ENCODE measurements at regions of chr10 and their contacts with region 1.

Region 1: GRCh38 chr10:98467506-98468346 is 21.0 kb upstream of the HPS1 start:
- H3K4me3 ChIP-seq: no peak overlapping the region; the same call in 1 of the 2 replicates
- H3K27ac ChIP-seq: no peak overlapping the region
- H3K4me1 ChIP-seq: 0 out of 2 replicates have a peak, but pooled peaks cover 3% of the 10 kb centered on the region
- CTCF ChIP-seq: peak; percentile 91

Region 2: DNA sequence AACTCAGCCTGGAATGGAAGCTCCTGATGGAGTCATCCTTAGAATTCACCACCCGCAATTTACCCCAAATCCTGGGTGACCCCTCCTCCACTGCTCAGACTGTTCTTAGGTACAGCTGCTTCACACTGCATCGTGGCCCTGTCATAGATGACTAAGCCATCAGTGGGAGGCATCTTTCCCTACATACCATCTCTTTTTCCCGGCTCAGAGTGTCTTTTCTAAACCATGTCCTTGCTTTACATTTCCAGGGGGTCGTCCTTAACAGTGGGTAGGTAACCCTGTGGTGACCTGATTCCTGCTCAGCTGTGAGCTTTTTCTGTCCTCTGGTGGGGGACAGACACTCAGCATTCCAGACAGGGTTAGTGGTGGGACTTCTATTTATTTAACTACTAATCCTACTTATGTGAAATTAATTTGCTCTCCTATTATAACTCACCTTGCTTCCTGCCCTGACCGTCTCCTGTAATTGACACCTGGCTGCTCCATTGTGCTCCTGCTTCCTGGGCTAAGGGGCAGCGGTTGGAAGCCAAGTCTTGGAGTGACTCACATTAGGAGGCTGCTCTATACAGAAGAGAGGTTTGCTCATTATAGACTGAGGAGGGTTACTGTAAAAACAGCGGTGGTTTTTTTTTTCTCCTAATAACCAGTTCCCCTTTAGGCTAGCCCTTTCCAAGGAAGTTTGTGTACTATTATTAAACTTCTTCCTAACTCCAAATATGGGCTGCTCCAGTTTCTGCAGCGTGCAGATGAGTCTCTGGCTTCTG is 93.3 kb before region 1 on chr10:
- CTCF ChIA-PET with region 1: no interaction called
- POLR2A ChIA-PET with region 1: no interaction called
- H3K4me3 ChIP-seq: no peak overlapping the region
- H3K27ac ChIP-seq: no peak overlapping the region
- H3K4me1 ChIP-seq: no peaks in the 10 kb centered on the region
- CTCF ChIP-seq: no peak

Region 3: GRCh38 chr10:98400482-98400881 is 67.2 kb before region 1 on chr10:
- CTCF ChIA-PET with region 1: no interaction called
- POLR2A ChIA-PET with region 1: no interaction called
- H3K4me3 ChIP-seq: no peak overlapping the region
- H3K27ac ChIP-seq: no peak overlapping the region
- H3K4me1 ChIP-seq: 0 out of 2 replicates have a peak, but pooled peaks cover 4% of the 10 kb centered on the region
- CTCF ChIP-seq: no peak

Region 4: GRCh38 chr10:98425511-98426352 is 42.0 kb before region 1 on chr10:
- CTCF ChIA-PET with region 1: interaction called, 14 read pairs
- POLR2A ChIA-PET with region 1: no interaction called
- H3K4me3 ChIP-seq: no peak overlapping the region
- H3K27ac ChIP-seq: no peak overlapping the region
- H3K4me1 ChIP-seq: no peaks in the 10 kb centered on the region
- CTCF ChIP-seq: no peak

Region 5: DNA sequence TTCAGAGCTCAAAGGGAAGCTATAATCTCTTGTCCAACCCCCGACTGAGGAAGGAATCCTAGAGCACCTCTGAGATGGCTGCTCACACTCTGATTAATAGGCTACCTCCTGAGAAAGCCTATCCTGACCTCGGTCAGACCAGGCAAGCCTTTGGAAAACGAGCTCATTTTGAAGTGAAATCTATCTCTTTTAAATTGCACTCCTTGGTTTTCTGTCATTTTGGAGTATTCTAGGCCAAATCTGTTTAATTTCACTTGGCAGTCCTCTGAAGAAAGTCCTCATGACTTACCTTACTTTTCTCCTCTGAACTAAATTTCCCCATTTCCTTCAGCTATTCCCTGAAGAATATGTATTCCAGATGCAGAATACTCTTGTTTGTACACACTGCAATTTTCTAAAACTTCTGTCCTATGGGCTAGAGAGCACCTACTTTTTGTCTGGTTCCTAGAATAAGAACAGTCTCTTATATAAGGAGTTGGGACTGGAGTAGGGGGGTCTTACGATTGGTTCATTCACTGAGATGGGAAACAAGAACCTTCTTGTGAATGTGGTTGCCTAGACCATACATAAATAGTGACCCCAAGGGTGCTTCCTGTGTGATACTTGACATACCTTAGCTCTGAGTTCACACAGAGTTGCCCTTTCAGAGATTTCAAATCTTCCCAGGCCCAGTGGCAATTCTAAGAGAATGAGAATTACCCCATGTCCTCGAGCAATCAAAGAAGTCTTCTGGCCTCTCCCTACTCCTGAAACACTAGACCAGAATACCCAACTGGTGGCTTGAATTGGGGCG is 10.9 kb after region 1 on chr10:
- CTCF ChIA-PET with region 1: interaction called, 17 read pairs
- POLR2A ChIA-PET with region 1: no interaction called
- H3K4me3 ChIP-seq: no peak overlapping the region
- H3K27ac ChIP-seq: no peak overlapping the region
- H3K4me1 ChIP-seq: no peaks in the 10 kb centered on the region
- CTCF ChIP-seq: no peak

Region 6: DNA sequence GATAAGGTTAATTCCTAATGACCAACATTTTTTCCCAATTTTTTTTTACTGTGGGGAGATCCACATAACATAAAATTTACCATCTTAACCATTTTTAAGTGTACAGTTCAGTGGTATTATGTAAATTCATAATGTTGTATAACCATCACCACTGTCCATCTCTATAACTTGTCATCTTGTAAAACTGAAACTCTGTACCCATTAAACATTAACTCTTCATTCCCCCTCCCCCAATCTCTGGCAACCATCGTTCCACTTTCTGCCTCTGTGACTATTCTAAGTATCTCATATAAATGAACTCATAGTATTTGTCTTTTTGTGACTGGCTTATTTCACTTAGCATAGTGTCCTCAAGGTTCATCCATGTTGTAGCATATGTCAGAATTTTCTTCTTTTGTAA is 25.0 kb after region 1 on chr10:
- CTCF ChIA-PET with region 1: no interaction called
- POLR2A ChIA-PET with region 1: no interaction called
- H3K4me3 ChIP-seq: no peak overlapping the region
- H3K27ac ChIP-seq: no peak overlapping the region
- H3K4me1 ChIP-seq: no peaks in the 10 kb centered on the region
- CTCF ChIP-seq: no peak

Region 7: DNA sequence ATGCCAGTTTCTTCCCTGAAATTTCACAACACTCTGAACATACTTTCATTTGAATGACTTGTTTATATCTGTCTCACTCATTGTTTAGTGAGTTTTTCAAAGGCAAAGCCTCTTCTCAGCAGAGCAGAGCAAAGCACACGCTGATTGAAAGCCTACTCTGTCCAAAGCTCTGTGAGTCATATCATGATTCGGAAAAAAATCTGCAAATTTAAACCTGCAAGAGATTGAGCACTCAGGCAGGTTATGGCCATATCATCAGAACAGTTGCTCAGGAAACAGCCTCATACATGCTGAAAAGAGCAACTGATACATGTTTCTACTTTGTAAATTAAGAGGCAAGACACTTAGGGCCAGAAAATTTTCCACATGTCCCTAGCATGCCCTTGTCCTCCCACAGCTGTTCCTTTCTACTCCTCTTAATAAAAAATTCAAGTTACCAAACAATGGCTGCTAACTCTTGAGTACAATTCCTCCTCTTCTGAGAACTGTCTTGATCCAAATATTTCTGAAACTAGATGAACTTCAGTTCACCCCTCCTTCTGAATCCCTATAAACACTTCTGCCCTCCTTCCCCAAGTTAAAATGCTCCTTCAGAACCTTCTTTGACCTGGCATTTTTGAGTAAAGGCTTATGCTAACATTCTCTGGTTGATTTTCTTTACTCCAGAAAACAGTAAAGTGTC is 119.6 kb after region 1 on chr10:
- CTCF ChIA-PET with region 1: no interaction called
- POLR2A ChIA-PET with region 1: no interaction called
- H3K4me3 ChIP-seq: no peak overlapping the region
- H3K27ac ChIP-seq: no peak overlapping the region
- H3K4me1 ChIP-seq: no peaks in the 10 kb centered on the region
- CTCF ChIP-seq: no peak

Region 8: GRCh38 chr10:99042051-99042771 is 574.5 kb after region 1 on chr10:
- CTCF ChIA-PET with region 1: interaction called, 13 read pairs
- POLR2A ChIA-PET with region 1: no interaction called
- H3K4me3 ChIP-seq: no peak overlapping the region
- H3K27ac ChIP-seq: no peak overlapping the region
- H3K4me1 ChIP-seq: no peaks in the 10 kb centered on the region
- CTCF ChIP-seq: no peak

Region 9: DNA sequence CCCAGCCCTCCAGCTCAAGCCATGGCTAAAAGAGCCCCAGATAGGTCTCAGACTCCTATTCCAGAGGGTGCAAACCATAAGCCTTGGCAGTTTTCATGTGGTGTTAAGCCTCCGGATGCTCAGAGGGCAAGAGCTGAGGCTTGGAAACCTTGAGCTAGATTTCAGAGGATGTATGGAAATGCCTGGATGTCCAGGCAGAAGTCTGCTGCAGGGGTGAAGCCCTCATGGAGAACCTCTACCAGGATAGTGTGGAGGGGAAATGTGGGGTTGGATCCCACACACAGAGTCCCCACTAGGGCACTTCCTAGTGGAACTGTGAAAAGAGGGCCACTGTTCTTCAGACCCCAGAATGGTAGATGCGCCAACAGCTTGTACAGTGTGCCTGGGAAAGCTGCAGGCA is 781.1 kb after region 1 on chr10:
- CTCF ChIA-PET with region 1: interaction called, 10 read pairs
- POLR2A ChIA-PET with region 1: no interaction called
- H3K4me3 ChIP-seq: no peak overlapping the region
- H3K27ac ChIP-seq: no peak overlapping the region
- H3K4me1 ChIP-seq: no peaks in the 10 kb centered on the region
- CTCF ChIP-seq: no peak

Region 10: GRCh38 chr10:99276848-99277486 is 809.2 kb after region 1 on chr10:
- CTCF ChIA-PET with region 1: interaction called, 17 read pairs
- POLR2A ChIA-PET with region 1: no interaction called
- H3K4me3 ChIP-seq: no peak overlapping the region
- H3K27ac ChIP-seq: no peak overlapping the region
- H3K4me1 ChIP-seq: peaks cover 8% of the 10 kb centered on the region
- CTCF ChIP-seq: peak; percentile 40; the same call in 1 of the 2 replicates

Measured in HEK293 (cell line).